ENCODE measurements at regions of chr16 and their contacts with region 1.

Region 1: DNA sequence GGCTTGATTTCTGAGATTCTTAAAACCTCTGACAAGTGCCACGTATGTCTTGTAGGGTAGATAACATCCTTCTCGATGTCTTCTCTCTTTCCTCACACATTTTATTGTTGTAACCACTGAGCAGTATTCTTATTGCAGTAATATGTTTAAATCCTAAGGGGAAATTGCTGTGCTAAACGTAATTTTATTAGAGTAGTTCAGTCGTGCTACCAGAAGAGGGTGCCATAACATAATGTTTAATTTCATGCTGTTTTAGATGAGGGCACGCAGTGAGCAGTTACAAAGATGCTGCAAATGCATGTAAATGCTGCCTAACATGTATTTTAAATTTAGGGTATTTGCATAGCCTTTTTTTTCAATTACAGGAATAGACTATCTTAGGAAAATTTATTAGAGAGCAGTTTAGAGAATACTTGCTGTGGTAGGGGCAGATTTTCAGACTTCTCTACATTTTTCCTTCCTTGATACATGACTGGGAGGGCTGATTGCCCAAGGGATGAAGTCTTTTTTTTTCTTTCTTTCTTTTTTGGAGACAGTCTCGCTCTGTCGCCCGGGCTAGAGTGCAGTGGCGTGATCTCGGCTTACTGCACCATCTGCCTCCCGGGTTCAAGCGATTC is 51.7 kb downstream of the GAN start:
- DNase-seq: peak; percentile 38
- ATAC-seq: peak; percentile 72
- H3K4me3 ChIP-seq: no peak overlapping the region
- H3K27ac ChIP-seq: no peak overlapping the region
- H3K4me1 ChIP-seq: no peaks in the 10 kb centered on the region
- H3K27me3 ChIP-seq: no peaks in the 10 kb centered on the region
- CTCF ChIP-seq: peak; percentile 71
- EP300 ChIP-seq: no peak
- POLR2A ChIP-seq: no peak
- RAD21 ChIP-seq: peak; percentile 67

Region 2: DNA sequence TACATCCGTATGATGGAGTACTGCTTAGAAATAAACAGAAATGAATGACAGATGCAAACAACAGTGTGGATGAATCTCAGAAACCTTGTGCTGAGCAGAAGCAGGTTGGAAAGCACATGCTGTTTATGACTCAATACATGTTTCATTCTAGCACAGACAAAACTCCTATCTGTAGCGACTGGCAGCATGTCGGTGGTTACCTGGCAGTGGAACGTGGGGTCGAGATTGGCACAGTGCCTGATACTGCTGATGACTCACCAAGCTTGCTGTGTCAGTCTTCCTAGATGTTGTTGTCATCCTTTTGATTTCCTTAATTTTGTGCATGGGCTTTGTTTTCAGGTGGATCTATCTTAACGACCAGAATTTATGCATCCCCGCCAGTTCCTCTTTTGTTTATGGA is 10.5 kb after region 1 on chr16:
- CTCF ChIA-PET with region 1: no interaction called
- POLR2A ChIA-PET with region 1: no interaction called
- in situ Hi-C with region 1: no loop called
- intact Hi-C with region 1: no loop called
- DNase-seq: no peak
- ATAC-seq: no peak
- H3K4me3 ChIP-seq: no peak overlapping the region
- H3K27ac ChIP-seq: no peak overlapping the region
- H3K4me1 ChIP-seq: no peaks in the 10 kb centered on the region
- H3K27me3 ChIP-seq: no peaks in the 10 kb centered on the region
- CTCF ChIP-seq: no peak
- EP300 ChIP-seq: no peak
- POLR2A ChIP-seq: no peak
- RAD21 ChIP-seq: no peak

Region 3: GRCh38 chr16:81873843-81874752 is 507.7 kb after region 1 on chr16:
- CTCF ChIA-PET with region 1: interaction called, 11 read pairs
- POLR2A ChIA-PET with region 1: no interaction called
- in situ Hi-C with region 1: loop called (anchors 10 kb)
- intact Hi-C with region 1: loop called (anchors 1 kb)
- DNase-seq: peak; percentile 45
- ATAC-seq: peak; percentile 91
- H3K4me3 ChIP-seq: no peak overlapping the region
- H3K27ac ChIP-seq: no peak overlapping the region
- H3K4me1 ChIP-seq: no peaks in the 10 kb centered on the region
- H3K27me3 ChIP-seq: peaks cover 0 to under 1% of the 10 kb centered on the region in 2 experiments; a peak in 4 of 5 replicates
- CTCF ChIP-seq: peak; percentile 70
- EP300 ChIP-seq: no peak
- POLR2A ChIP-seq: no peak
- RAD21 ChIP-seq: no peak